ENCODE measurements at regions of chr18 and their contacts with region 1.

Region 1: GRCh38 chr18:10872304-10872703 is 277.1 kb downstream of the PIEZO2 start:
- DNase-seq: peak in 4 of 5 donors; percentile 9 to 59 (median 22)
- ATAC-seq: peak; percentile 81 to 97 (median 90)
- H3K4me3 ChIP-seq: no peak overlapping the region
- H3K27ac ChIP-seq: no peak overlapping the region
- H3K4me1 ChIP-seq: peaks cover 0 to 7% (median 0%) of the 10 kb centered on the region in 12 donors
- H3K27me3 ChIP-seq: peaks cover 0 to 9% (median 0%) of the 10 kb centered on the region in 9 donors
- CTCF ChIP-seq: no peak
- POLR2A ChIP-seq: no peak

Region 2: GRCh38 chr18:10841203-10841602 is 31.1 kb before region 1 on chr18:
- intact Hi-C with region 1: loop called in 1 of 10 experiments (anchors 2 kb)
- DNase-seq: no peak
- ATAC-seq: no peak
- H3K4me3 ChIP-seq: no peak overlapping the region
- H3K27ac ChIP-seq: no peak overlapping the region
- H3K4me1 ChIP-seq: peaks cover 0 to 4% (median 0%) of the 10 kb centered on the region in 12 donors
- H3K27me3 ChIP-seq: no peaks in the 10 kb centered on the region
- CTCF ChIP-seq: no peak
- POLR2A ChIP-seq: no peak

Region 3: GRCh38 chr18:10936176-10937053 is 64.1 kb after region 1 on chr18:
- intact Hi-C with region 1: no loop called
- DNase-seq: no peak
- ATAC-seq: no peak
- H3K4me3 ChIP-seq: no peak overlapping the region
- H3K27ac ChIP-seq: no peak overlapping the region
- H3K4me1 ChIP-seq: peaks cover 0 to 13% (median 0%) of the 10 kb centered on the region in 12 donors
- H3K27me3 ChIP-seq: no peaks in the 10 kb centered on the region
- CTCF ChIP-seq: no peak
- POLR2A ChIP-seq: no peak

Region 4: GRCh38 chr18:10953672-10954071 is 81.4 kb after region 1 on chr18:
- intact Hi-C with region 1: no loop called
- DNase-seq: no peak
- ATAC-seq: no peak
- H3K4me3 ChIP-seq: no peak overlapping the region
- H3K27ac ChIP-seq: no peak overlapping the region
- H3K4me1 ChIP-seq: no peaks in the 10 kb centered on the region
- H3K27me3 ChIP-seq: no peaks in the 10 kb centered on the region
- CTCF ChIP-seq: no peak
- POLR2A ChIP-seq: no peak

Region 5: GRCh38 chr18:11419338-11419737 is 547.0 kb after region 1 on chr18:
- intact Hi-C with region 1: no loop called
- DNase-seq: no peak
- ATAC-seq: no peak
- H3K4me3 ChIP-seq: no peak overlapping the region
- H3K27ac ChIP-seq: no peak overlapping the region
- H3K4me1 ChIP-seq: no peaks in the 10 kb centered on the region
- H3K27me3 ChIP-seq: no peaks in the 10 kb centered on the region
- CTCF ChIP-seq: no peak
- POLR2A ChIP-seq: no peak